ENCODE measurements at regions of chr4 and their contacts with region 1.

Region 1: DNA sequence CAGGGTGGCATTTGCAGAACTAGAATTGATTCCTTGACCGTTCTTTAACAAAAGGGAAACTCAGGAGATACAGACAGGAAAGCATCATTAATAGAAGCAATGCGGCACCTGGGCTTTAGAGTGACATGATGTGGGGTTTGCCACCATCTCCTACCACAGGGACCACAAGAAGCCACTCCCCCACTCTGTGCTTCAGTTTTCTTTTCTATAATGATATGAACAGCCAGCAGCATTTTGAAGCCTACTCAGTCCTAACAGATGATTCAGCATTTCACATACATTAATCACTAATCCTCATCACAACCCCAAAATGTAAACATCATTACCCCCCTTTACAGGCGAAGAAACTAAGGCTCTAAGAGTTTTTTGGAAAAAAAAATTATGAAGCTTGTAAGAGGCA is 22.9 kb downstream of the CCDC149 start:
- DNase-seq: no peak
- H3K4me3 ChIP-seq: no peak overlapping the region
- H3K27ac ChIP-seq: no peak overlapping the region
- H3K4me1 ChIP-seq: no peaks in the 10 kb centered on the region
- H3K27me3 ChIP-seq: no peaks in the 10 kb centered on the region
- CTCF ChIP-seq: no peak

Region 2: DNA sequence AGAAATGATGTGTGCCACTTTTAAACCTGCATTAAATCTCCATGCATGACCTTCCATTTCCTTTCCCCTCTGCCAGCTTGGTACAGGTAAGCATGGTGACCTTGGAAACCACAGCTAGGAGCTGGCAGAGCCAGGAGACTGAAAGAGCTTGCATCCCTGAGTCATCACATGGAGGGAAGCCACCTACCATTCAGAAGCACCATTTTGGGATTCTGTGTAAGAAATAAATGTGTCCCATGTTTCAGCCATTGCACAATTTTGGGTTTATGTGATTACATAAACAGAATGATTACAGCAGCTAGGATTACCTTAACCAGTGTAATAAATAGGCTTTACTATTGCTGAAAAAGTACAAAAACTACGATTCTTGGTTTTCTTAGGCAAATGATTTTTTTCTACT is 40.2 kb after region 1 on chr4:
- intact Hi-C with region 1: loop called (anchors 2 kb)
- DNase-seq: no peak
- H3K4me3 ChIP-seq: no peak overlapping the region
- H3K27ac ChIP-seq: no peak overlapping the region
- H3K4me1 ChIP-seq: no peaks in the 10 kb centered on the region
- H3K27me3 ChIP-seq: no peaks in the 10 kb centered on the region
- CTCF ChIP-seq: no peak